Ascending aorta (tissue), 2 donors: ENCODE measurements at regions of chr15 and their contacts with region 1.

Region 1: GRCh38 chr15:68559345-68560310 is 19.2 kb upstream of the CORO2B start:
- DNase-seq: peak in 1 of 2 donors; percentile 87
- H3K4me3 ChIP-seq: peak overlapping the region; percentile 47 to 61
- H3K27ac ChIP-seq: no peak overlapping the region
- H3K4me1 ChIP-seq: peaks cover 3 to 6% of the 10 kb centered on the region in 2 donors
- H3K27me3 ChIP-seq: no peaks in the 10 kb centered on the region
- CTCF ChIP-seq: peak; percentile 94 to 98 (median 97)

Region 2: GRCh38 chr15:68229386-68230156 is 330.1 kb before region 1 on chr15 and contains the start of gene CLN6:
- intact Hi-C with region 1: no loop called
- DNase-seq: peak; percentile 46 to 85
- H3K4me3 ChIP-seq: peak within 1 kb of the TSS; percentile 96
- H3K27ac ChIP-seq: peak within 1 kb of the TSS; percentile 57 to 67
- H3K4me1 ChIP-seq: peaks cover 0 to 13% of the 10 kb centered on the region in 2 donors
- H3K27me3 ChIP-seq: no peaks in the 10 kb centered on the region
- CTCF ChIP-seq: no peak
- total RNA-seq, gene CLN6: 6.4 TPM

Region 3: GRCh38 chr15:68330901-68331300 is 228.7 kb before region 1 on chr15:
- intact Hi-C with region 1: no loop called
- DNase-seq: no peak
- H3K4me3 ChIP-seq: no peak overlapping the region
- H3K27ac ChIP-seq: peak overlapping the region; percentile 27 to 98
- H3K4me1 ChIP-seq: peaks cover 29 to 49% of the 10 kb centered on the region in 2 donors
- H3K27me3 ChIP-seq: no peaks in the 10 kb centered on the region
- CTCF ChIP-seq: no peak

Region 4: GRCh38 chr15:68578174-68578979 is 18.7 kb after region 1 on chr15:
- intact Hi-C with region 1: loop called (anchors 2 kb)
- DNase-seq: peak in 1 of 2 donors; percentile 89
- H3K4me3 ChIP-seq: peak overlapping the region; percentile 60 to 82
- H3K27ac ChIP-seq: peak overlapping the region; percentile 66 to 81
- H3K4me1 ChIP-seq: peaks cover 3 to 5% of the 10 kb centered on the region in 2 donors
- H3K27me3 ChIP-seq: no peaks in the 10 kb centered on the region
- CTCF ChIP-seq: peak; percentile 30 to 76 (median 72)

Region 5: DNA sequence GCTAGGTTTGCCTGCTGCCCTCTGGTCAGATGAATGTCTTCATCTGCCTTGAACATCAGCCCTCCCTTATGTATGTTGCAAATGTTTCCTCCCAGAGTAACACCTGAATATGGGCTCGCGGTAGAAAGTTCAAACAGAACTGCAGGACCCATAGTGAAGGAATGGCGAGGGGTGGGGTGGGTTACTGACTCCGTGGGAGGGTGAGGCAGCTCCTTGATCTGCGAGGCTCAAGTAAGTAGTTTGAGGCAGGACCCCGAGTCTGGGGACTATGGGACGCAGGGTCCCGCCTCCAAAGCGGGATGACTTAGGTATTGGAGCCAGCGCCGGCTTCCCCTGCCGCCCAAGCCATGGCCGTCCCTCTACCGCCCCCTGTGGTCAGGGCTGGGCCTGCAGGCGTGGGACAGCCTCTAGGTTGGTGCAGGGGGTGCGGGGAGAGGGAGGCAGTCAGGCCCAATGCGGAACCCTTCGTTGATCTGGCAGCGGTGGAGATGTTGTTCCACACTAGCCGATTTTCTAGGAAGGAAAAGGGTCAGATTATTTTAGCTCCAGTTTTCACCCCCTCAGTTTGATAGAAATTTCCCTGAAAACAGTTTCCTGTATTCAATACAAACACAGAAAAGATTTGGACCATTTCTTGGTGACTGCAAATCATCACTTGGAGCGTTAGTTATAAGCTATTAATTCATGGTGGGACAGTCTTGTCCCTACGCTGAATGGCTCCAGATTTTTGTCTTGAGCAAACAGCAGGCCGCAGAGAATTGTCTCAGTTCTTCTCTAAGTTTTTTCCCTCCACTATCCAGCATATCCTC is 91.5 kb after region 1 on chr15:
- intact Hi-C with region 1: loop called (anchors 5 kb)
- DNase-seq: peak in 1 of 2 donors; percentile 75
- H3K4me3 ChIP-seq: no peak overlapping the region
- H3K27ac ChIP-seq: no peak overlapping the region
- H3K4me1 ChIP-seq: no peaks in the 10 kb centered on the region
- H3K27me3 ChIP-seq: no peaks in the 10 kb centered on the region
- CTCF ChIP-seq: peak; percentile 42 to 62 (median 62)

Region 6: DNA sequence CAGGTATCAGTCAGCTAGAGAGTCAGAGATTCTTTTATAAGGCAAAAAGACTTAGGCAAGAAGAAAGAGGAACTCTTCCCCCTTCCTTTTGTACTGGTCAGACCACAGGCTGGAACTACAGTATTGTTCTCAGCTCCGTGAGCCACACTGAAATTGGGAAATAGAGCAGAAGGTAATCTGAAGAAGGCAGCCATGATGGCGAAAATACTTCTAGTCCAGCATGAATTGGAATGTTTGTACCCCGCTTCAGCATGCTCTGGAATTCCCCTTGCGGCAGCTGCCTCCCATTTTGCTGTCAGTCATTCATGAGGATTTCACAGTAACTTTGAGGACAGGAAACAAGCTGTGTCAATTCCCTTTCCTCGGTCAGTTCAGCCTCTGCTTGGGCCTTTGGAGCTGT is 115.3 kb after region 1 on chr15:
- intact Hi-C with region 1: loop called (anchors 1 kb)
- DNase-seq: no peak
- H3K4me3 ChIP-seq: no peak overlapping the region
- H3K27ac ChIP-seq: no peak overlapping the region
- H3K4me1 ChIP-seq: no peaks in the 10 kb centered on the region
- H3K27me3 ChIP-seq: no peaks in the 10 kb centered on the region
- CTCF ChIP-seq: no peak

Region 7: GRCh38 chr15:68875377-68876116 is 315.9 kb after region 1 on chr15:
- intact Hi-C with region 1: loop called (anchors 5 kb)
- DNase-seq: peak; percentile 55 to 95
- H3K4me3 ChIP-seq: peak overlapping the region; percentile 49 to 60
- H3K27ac ChIP-seq: no peak overlapping the region
- H3K4me1 ChIP-seq: peaks cover 0 to 2% of the 10 kb centered on the region in 2 donors
- H3K27me3 ChIP-seq: no peaks in the 10 kb centered on the region
- CTCF ChIP-seq: peak; percentile 81 to 89 (median 82)

Region 8: DNA sequence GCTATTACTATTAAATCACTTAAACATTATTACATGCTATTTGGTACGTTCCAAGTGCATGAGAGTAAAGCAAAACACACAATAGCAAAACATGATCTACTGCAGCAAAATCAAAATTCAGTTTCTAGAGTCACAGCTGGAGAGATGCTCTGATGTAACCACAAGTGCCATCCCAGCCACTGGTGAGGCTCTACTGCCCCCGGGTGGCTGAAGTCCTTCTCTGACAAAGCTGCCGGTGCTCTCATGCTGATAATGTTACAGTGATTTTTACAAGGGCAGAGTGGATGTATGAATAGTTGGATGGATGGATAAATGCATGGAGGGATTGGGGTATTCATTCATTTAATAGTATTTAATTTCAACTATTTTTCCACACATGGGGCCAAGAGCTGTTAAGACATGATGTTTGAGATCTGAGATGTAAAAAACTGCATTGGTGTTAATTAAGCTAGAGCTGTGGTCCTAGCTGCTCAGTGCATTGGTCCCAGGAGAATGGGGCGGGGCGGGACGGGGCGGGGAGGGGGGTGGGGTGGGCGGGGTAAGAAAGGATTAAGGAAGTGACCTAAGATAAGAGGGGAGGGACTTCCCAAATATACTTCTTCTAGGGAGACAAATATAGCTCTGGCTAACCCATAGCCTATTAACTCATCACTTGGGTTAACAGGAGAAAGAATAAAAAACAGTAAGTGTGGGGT is 365.4 kb after region 1 on chr15:
- intact Hi-C with region 1: loop called (anchors 5 kb)
- DNase-seq: peak in 1 of 2 donors; percentile 86
- H3K4me3 ChIP-seq: no peak overlapping the region
- H3K27ac ChIP-seq: no peak overlapping the region
- H3K4me1 ChIP-seq: no peaks in the 10 kb centered on the region
- H3K27me3 ChIP-seq: no peaks in the 10 kb centered on the region
- CTCF ChIP-seq: peak; percentile 51 to 80 (median 71)